Gastrocnemius medialis (tissue), 4 donors: ENCODE measurements at regions of chr7 and their contacts with region 1.

Region 1: GRCh38 chr7:5494683-5495561 is 71.3 kb upstream of the TNRC18 start:
- DNase-seq: peak; percentile 62 to 76
- ATAC-seq: peak; percentile 71 to 75
- H3K4me3 ChIP-seq: peak overlapping the region; percentile 3 to 53 (median 41)
- H3K27ac ChIP-seq: peak overlapping the region; percentile 81 to 93 (median 86)
- H3K4me1 ChIP-seq: peaks cover 21 to 29% of the 10 kb centered on the region in 2 donors
- H3K27me3 ChIP-seq: no peaks in the 10 kb centered on the region
- CTCF ChIP-seq: peak; percentile 91 to 98 (median 96)
- POLR2A ChIP-seq: peak in 1 of 2 donors; percentile 34

Region 2: GRCh38 chr7:5557920-5558401 is 63.0 kb after region 1 on chr7:
- in situ Hi-C with region 1: no loop called
- intact Hi-C with region 1: loop called (anchors 1 kb)
- DNase-seq: peak; percentile 92 to 99
- ATAC-seq: peak; percentile 58 to 64
- H3K4me3 ChIP-seq: peak overlapping the region; percentile 20 to 90 (median 30)
- H3K27ac ChIP-seq: peak overlapping the region; percentile 94 to 99 (median 98)
- H3K4me1 ChIP-seq: peaks cover 41 to 42% of the 10 kb centered on the region in 2 donors
- H3K27me3 ChIP-seq: peaks cover 5 to 8% (median 8%) of the 10 kb centered on the region in 3 donors
- CTCF ChIP-seq: no peak
- POLR2A ChIP-seq: peak; percentile 50 to 77

Region 3: DNA sequence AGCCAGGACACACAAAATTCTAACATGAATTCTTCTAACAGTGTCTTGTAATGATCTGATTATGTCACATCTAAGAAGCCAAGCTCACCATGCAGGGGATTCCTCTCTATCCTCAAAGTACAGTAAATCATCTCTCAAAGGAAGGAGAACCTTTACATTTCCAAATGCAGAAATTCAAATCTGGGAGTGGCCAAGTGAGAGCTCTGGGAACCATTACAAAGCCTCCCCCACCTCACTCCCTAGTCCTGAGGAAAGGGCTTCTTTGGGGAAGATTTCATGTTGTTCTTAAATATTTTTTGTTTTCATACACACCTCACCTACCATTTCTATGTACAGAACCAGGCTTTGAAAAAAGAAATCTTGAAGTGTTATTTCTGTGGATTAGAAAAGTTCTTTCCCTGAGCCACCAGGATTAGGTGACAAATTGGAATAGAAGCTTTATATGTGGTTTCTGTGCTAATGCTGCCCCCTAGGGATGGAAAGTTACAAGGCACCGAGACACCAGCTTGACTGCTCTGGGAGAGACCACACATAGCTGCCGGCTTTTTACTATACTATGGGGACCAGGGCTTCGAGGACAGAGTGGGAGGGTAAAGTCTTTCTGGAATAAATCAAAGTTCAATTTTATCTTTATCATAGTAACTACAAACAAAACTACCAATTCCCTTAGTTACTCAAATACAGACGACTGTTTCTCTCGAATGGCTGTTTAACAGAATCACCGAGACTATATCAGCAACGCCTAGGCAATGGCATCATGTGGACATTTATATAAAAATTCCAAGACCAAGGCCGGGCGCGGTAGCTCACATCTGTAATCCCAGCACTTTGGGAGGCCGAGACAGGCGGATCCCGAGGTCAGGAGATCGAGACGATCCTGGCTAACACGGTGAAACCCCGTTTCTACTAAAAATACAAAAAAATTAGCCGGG is 170.4 kb after region 1 on chr7:
- in situ Hi-C with region 1: loop called in 3 of 4 experiments (anchors 10 kb)
- intact Hi-C with region 1: loop called (anchors 1 kb)
- DNase-seq: peak; percentile 27 to 64
- ATAC-seq: peak; percentile 81 to 87
- H3K4me3 ChIP-seq: no peak overlapping the region
- H3K27ac ChIP-seq: no peak overlapping the region
- H3K4me1 ChIP-seq: peaks cover 0 to 27% of the 10 kb centered on the region in 2 donors
- H3K27me3 ChIP-seq: no peaks in the 10 kb centered on the region
- CTCF ChIP-seq: peak; percentile 76 to 90 (median 85)
- POLR2A ChIP-seq: no peak

Region 4: GRCh38 chr7:5677538-5678294 is 182.8 kb after region 1 on chr7:
- in situ Hi-C with region 1: loop called in 2 of 4 experiments (anchors 10 kb)
- intact Hi-C with region 1: loop called (anchors 2 kb)
- DNase-seq: peak in 1 of 2 donors; percentile 52
- ATAC-seq: peak; percentile 59 to 75
- H3K4me3 ChIP-seq: no peak overlapping the region
- H3K27ac ChIP-seq: peak overlapping the region in 1 of 4 donors; percentile 22
- H3K4me1 ChIP-seq: peaks cover 20 to 27% of the 10 kb centered on the region in 2 donors
- H3K27me3 ChIP-seq: no peaks in the 10 kb centered on the region
- CTCF ChIP-seq: peak; percentile 33 to 66 (median 60)
- POLR2A ChIP-seq: no peak

Region 5: GRCh38 chr7:5704534-5704922 is 209.6 kb after region 1 on chr7:
- in situ Hi-C with region 1: loop called in 2 of 4 experiments (anchors 10 kb)
- intact Hi-C with region 1: loop called (anchors 2 kb)
- DNase-seq: peak; percentile 55 to 79
- ATAC-seq: peak; percentile 95 to 97
- H3K4me3 ChIP-seq: peak overlapping the region in 2 of 4 donors; percentile 10 to 26
- H3K27ac ChIP-seq: peak overlapping the region; percentile 24 to 70 (median 50)
- H3K4me1 ChIP-seq: peaks cover 20 to 23% of the 10 kb centered on the region in 2 donors
- H3K27me3 ChIP-seq: no peaks in the 10 kb centered on the region
- CTCF ChIP-seq: peak; percentile 89 to 96 (median 92)
- POLR2A ChIP-seq: no peak